ENCODE measurements at regions of chr15 and their contacts with region 1.

Region 1: DNA sequence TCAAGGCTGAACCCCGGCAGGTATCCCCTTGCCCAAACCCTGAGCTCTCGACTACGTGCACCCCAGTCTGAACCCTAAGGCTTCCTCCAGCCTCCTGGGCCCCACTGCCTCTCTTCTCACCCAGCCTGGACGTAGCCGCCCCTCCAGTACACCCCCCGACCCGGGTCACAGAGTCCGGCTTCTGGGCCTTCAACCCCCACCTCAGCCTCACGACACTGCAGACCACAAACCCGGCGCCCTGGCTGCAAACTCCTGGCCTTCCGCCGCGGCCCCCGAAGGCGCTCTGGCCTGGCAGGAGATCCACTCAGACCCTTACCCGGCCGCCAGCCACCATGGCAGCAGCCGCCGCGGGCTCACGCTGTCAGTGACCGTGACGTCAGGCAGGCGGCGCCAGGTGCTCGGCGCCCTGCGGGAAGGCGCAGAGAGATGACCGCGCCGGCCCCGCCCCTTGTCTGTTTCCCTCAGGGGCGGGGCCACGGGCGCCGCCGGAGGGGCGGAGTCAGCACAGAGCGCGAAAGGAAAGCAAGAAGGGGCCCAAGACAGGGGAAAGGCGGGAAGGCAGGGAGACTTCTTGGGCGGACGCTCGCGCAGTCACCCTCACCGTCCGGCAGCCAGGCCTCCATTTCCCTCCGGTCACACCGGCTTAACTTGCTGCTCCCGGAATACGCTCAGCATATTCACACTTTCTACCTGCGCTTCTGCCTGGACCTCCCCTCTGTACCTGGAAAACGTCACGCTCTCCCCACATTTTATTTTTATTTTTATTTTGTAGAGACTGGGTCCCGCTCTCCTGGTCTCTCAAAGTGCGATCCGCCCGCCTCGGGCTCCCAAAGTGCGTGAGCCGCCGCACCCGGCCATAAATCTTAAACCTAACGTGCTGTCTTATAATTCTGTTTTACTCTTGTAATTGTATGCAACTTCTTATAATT is at the start of gene RMDN3:
- H3K4me3 ChIP-seq: peak within 1 kb of the TSS; percentile 93
- H3K27ac ChIP-seq: peak within 1 kb of the TSS; percentile 93
- H3K4me1 ChIP-seq: no peaks in the 10 kb centered on the region
- CTCF ChIP-seq: 0 out of 2 replicates have a peak, but pooled peaks have one; percentile 9

Region 2: GRCh38 chr15:40477642-40478327 is 277.4 kb before region 1 on chr15:
- CTCF ChIA-PET with region 1: no interaction called
- POLR2A ChIA-PET with region 1: interaction called, 11 read pairs
- H3K4me3 ChIP-seq: no peak overlapping the region
- H3K27ac ChIP-seq: no peak overlapping the region
- H3K4me1 ChIP-seq: no peaks in the 10 kb centered on the region
- CTCF ChIP-seq: no peak